Endothelial cell of umbilical vein (primary cell): ENCODE measurements at regions of chr10 and their contacts with region 1.

Region 1: GRCh38 chr10:93482145-93482834 is at the start of gene MYOF:
- DNase-seq: peak; percentile 89
- H3K4me3 ChIP-seq: peak within 1 kb of the TSS; percentile 57 to 99 (median 72)
- H3K27ac ChIP-seq: peak within 1 kb of the TSS; percentile 89
- H3K4me1 ChIP-seq: peaks cover 22% of the 10 kb centered on the region
- H3K27me3 ChIP-seq: no peaks in the 10 kb centered on the region
- CTCF ChIP-seq: peak; percentile 46 to 47
- POLR2A ChIP-seq: peak; percentile 76
- total RNA-seq, gene MYOF: 342 and 379 TPM in 2 replicates

Region 2: DNA sequence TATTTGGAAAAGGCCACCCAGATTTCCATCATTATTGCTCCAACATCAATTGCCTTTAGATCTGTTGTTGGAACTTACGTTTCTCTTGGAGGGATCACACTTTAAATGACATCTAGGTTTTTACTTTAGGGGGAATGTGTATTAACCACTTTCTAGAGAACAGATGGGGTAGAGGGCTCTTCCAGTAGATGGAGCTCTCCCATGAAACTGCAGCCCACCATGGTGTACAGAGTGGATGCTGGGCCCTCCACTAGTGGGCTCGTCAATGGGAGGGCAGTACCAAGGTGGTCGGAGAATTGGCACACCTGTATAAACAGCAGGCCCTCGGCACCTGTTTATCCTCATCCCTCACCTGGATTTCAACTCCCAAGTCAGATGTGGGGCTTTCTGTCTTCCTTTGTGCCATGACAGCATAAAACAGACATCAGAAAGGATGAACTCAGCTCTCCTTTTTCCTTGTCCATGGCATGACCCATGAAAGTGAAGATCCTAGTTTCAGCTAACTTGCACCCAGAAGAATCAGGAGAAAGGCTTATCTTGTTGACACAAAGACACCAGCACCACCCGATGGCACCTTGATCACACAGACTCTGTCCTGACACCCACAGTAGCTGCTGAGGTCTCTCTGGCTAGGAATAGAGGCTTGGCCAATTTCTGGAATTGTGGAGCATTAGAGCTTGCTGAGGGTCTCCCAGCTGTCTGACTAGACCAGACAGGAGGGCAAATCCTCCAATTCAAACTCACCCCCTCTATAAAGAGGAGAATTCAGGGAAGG is 258.1 kb before region 1 on chr10:
- CTCF ChIA-PET with region 1: no interaction called
- POLR2A ChIA-PET with region 1: no interaction called
- dilution Hi-C with region 1: no loop called
- intact Hi-C with region 1: no loop called
- DNase-seq: no peak
- H3K4me3 ChIP-seq: no peak overlapping the region
- H3K27ac ChIP-seq: no peak overlapping the region
- H3K4me1 ChIP-seq: no peaks in the 10 kb centered on the region
- H3K27me3 ChIP-seq: peaks cover 8 to 9% of the 10 kb centered on the region in 2 experiments
- CTCF ChIP-seq: no peak
- POLR2A ChIP-seq: no peak

Region 3: DNA sequence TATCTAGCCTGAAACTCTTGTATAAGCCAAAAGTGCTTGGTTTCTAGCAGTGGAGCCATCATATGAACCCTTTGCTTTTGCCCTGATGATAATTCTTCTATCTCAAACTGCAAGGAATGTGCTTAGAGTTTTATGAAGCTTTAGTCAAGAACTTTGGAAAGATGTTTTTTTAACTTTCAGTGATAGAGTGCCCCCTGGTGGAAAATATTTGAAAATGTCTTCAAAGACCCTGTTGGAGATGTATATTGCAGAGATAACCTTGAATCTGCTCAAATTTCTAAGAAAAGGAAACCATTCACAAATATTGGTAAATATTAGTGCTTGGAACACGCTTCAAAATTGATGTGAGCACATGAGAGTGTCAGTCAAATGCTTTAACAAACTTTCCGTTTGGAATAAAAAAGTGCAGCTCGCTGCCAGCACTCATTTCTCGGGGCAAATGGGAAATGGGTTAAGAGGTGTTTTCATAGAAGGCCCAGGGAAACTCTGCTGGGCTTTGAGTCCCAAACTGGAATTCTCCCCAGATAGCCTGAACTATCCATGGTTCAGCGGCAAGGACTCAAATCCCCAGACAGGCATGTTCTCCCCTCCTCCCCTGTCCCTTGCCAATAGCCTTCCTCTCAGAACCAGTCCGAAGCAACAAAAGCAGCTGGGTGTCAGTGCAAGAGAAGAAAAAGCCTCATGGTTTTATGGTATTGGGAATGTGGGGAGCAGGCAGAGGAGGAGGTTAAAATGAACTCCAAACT is 129.5 kb before region 1 on chr10:
- CTCF ChIA-PET with region 1: interaction called, 23 read pairs
- POLR2A ChIA-PET with region 1: no interaction called
- dilution Hi-C with region 1: no loop called
- intact Hi-C with region 1: no loop called
- DNase-seq: peak; percentile 46
- H3K4me3 ChIP-seq: no peak overlapping the region
- H3K27ac ChIP-seq: no peak overlapping the region
- H3K4me1 ChIP-seq: peaks cover 2% of the 10 kb centered on the region
- H3K27me3 ChIP-seq: no peaks in the 10 kb centered on the region
- CTCF ChIP-seq: peak; percentile 36 to 46
- POLR2A ChIP-seq: no peak

Region 4: GRCh38 chr10:93386631-93387369 is 95.5 kb before region 1 on chr10:
- CTCF ChIA-PET with region 1: interaction called, 19 read pairs
- POLR2A ChIA-PET with region 1: no interaction called
- dilution Hi-C with region 1: no loop called
- intact Hi-C with region 1: no loop called
- DNase-seq: no peak
- H3K4me3 ChIP-seq: no peak overlapping the region
- H3K27ac ChIP-seq: no peak overlapping the region
- H3K4me1 ChIP-seq: peaks cover 17% of the 10 kb centered on the region
- H3K27me3 ChIP-seq: no peaks in the 10 kb centered on the region
- CTCF ChIP-seq: no peak
- POLR2A ChIP-seq: no peak

Region 5: GRCh38 chr10:93413252-93413689 is 69.0 kb before region 1 on chr10:
- CTCF ChIA-PET with region 1: interaction called, 48 read pairs
- POLR2A ChIA-PET with region 1: no interaction called
- dilution Hi-C with region 1: no loop called
- intact Hi-C with region 1: loop called (anchors 1 kb)
- DNase-seq: peak; percentile 65
- H3K4me3 ChIP-seq: no peak overlapping the region
- H3K27ac ChIP-seq: peak overlapping the region; percentile 49
- H3K4me1 ChIP-seq: peaks cover 28% of the 10 kb centered on the region
- H3K27me3 ChIP-seq: no peaks in the 10 kb centered on the region
- CTCF ChIP-seq: no peak
- POLR2A ChIP-seq: no peak

Region 6: GRCh38 chr10:93445097-93445960 is 37.0 kb before region 1 on chr10:
- CTCF ChIA-PET with region 1: interaction called, 69 read pairs
- POLR2A ChIA-PET with region 1: interaction called, 3 read pairs
- dilution Hi-C with region 1: no loop called
- intact Hi-C with region 1: no loop called
- DNase-seq: peak; percentile 98
- H3K4me3 ChIP-seq: no peak overlapping the region
- H3K27ac ChIP-seq: peak overlapping the region; percentile 67
- H3K4me1 ChIP-seq: peaks cover 22% of the 10 kb centered on the region
- H3K27me3 ChIP-seq: no peaks in the 10 kb centered on the region
- CTCF ChIP-seq: no peak
- POLR2A ChIP-seq: peak; percentile 15

Region 7: DNA sequence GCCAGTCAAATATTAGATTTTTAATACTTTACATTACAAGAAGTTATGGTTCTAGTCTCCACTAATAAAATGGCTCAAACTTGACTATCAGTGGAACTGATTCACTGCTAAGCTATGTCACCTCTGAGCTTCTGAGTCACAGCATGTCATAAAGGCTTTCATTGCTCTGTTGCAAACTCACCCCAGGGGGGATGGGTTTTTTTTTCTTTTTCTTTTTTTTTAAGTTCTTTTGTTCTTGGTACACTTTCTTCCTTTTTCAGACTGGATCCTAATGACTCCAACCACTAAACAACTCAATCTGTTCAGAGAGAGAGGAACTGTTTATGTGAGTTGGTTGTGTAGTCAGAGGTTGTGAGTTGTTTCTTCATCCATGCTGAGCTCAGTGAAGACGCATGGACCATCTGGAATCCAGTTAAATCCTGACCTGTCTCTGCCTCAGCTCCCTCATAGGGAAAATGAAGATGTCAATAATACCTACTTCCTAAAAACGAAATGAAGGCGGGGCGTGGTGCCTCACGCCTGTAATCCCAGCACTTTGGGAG is 11.1 kb before region 1 on chr10:
- CTCF ChIA-PET with region 1: interaction called, 79 read pairs
- POLR2A ChIA-PET with region 1: interaction called, 7 read pairs
- dilution Hi-C with region 1: no loop called
- intact Hi-C with region 1: no loop called
- DNase-seq: peak; percentile 97
- H3K4me3 ChIP-seq: no peak overlapping the region
- H3K27ac ChIP-seq: peak overlapping the region; percentile 86
- H3K4me1 ChIP-seq: peaks cover 87% of the 10 kb centered on the region
- H3K27me3 ChIP-seq: no peaks in the 10 kb centered on the region
- CTCF ChIP-seq: no peak
- POLR2A ChIP-seq: no peak

Region 8: DNA sequence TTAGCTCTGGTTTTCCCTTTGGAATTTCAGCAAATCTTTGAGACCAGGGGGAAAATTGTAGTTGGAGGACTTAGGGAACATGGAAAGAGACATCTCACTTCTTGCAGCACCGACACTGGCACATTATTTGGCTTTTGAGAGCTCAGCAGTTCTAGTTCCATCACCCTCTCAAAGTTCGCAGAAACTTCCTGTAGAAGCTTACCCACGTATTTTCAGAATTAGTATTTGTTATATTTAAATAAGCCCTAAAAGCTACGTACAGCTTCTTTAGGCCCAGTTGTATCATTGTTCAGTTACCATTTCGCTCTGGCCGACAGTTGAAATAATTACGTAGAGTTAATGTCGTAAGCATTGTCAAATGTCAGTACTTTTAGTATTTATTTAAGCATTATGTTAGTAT is 27.5 kb after region 1 on chr10:
- CTCF ChIA-PET with region 1: interaction called, 20 read pairs
- POLR2A ChIA-PET with region 1: no interaction called
- dilution Hi-C with region 1: no loop called
- intact Hi-C with region 1: no loop called
- DNase-seq: no peak
- H3K4me3 ChIP-seq: no peak overlapping the region
- H3K27ac ChIP-seq: no peak overlapping the region
- H3K4me1 ChIP-seq: peaks cover 4% of the 10 kb centered on the region
- H3K27me3 ChIP-seq: no peaks in the 10 kb centered on the region
- CTCF ChIP-seq: no peak
- POLR2A ChIP-seq: no peak